Endothelial cell of umbilical vein (primary cell): ENCODE measurements at regions of chr2 and their contacts with region 1.

Region 1: GRCh38 chr2:18378020-18378653 is 182.3 kb downstream of the RDH14 start:
- DNase-seq: peak; percentile 54
- H3K4me3 ChIP-seq: no peak overlapping the region
- H3K27ac ChIP-seq: no peak overlapping the region
- H3K4me1 ChIP-seq: peaks cover 9% of the 10 kb centered on the region
- H3K27me3 ChIP-seq: no peaks in the 10 kb centered on the region
- CTCF ChIP-seq: peak; percentile 68 to 77
- POLR2A ChIP-seq: no peak

Region 2: DNA sequence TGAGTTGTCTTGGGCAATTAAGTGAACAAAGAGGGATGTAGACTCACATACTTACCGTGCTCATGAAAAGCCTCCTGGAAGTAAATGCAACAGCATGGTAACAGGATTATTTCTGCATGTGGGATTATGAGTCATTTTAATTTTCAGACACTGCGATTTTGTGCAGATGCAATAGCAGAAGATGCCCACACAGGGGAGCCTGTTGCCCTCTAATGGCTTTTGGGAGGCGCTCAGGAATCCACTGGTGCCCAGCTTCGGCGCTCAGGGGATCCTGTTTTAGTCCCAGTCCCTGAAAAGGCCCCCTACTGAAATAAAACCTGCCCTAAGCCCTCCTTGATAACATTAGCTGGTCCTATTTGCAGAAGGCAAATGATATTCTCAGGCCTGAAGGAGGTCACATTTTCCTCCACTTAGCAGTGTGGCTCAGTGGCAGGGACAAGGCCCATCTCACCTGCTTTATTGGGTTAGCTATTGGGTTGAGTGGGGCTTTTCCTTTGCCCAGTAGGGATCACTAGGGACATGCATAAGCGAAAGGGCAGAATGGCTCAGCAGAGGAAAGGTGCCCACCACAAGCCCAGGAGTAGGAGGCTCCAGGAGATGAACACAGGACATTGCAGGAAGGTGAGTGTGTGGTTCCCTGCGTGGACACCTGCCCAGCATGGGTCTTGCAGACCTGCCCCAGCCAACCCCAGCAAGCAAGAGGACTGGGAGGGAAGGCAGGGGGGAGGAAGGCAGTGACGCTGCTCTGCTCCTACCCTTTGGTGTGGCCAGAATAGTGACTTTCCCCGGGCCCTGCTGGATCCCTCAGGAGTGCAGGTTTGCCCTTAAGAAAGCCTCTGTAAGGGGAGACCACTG is 526.2 kb before region 1 on chr2:
- CTCF ChIA-PET with region 1: interaction called, 42 read pairs
- POLR2A ChIA-PET with region 1: no interaction called
- dilution Hi-C with region 1: no loop called
- intact Hi-C with region 1: loop called (anchors 1 kb)
- DNase-seq: peak; percentile 51
- H3K4me3 ChIP-seq: no peak overlapping the region
- H3K27ac ChIP-seq: no peak overlapping the region
- H3K4me1 ChIP-seq: no peaks in the 10 kb centered on the region
- H3K27me3 ChIP-seq: no peaks in the 10 kb centered on the region
- CTCF ChIP-seq: peak; percentile 72 to 79
- POLR2A ChIP-seq: no peak

Region 3: GRCh38 chr2:18077704-18078103 is 300.4 kb before region 1 on chr2:
- CTCF ChIA-PET with region 1: no interaction called
- POLR2A ChIA-PET with region 1: no interaction called
- dilution Hi-C with region 1: no loop called
- intact Hi-C with region 1: loop called (anchors 10 kb)
- DNase-seq: no peak
- H3K4me3 ChIP-seq: no peak overlapping the region
- H3K27ac ChIP-seq: no peak overlapping the region
- H3K4me1 ChIP-seq: no peaks in the 10 kb centered on the region
- H3K27me3 ChIP-seq: no peaks in the 10 kb centered on the region
- CTCF ChIP-seq: no peak
- POLR2A ChIP-seq: no peak

Region 4: DNA sequence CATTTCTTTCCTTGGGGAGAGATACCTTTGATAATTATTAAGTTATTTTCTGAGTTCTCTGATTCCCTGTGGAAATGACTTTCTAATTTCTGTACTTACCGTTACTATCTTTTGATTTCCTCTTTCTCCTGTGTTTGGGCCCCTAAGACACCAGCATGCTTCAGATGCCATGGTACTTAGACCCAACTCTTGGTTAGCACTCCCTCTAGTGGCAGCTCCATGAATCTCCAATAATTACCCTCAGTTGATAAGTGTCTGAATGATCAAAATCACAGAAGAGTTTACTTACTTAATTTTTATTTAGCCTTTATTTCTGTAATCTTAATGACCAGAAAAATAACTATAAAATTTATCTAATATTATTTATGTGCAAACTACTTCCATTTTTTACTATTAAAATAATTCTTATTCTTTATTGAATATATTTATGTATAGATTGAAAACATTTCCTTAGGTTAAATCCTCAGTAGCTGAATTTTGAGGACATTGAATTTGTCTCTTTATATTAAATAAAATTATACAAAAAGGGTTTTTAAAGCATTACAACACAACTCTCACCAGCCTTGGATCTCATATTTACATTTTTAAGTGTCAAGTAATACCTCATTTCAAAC is 199.3 kb before region 1 on chr2:
- CTCF ChIA-PET with region 1: interaction called, 30 read pairs
- POLR2A ChIA-PET with region 1: no interaction called
- dilution Hi-C with region 1: no loop called
- intact Hi-C with region 1: loop called (anchors 1 kb)
- DNase-seq: peak; percentile 65
- H3K4me3 ChIP-seq: no peak overlapping the region
- H3K27ac ChIP-seq: no peak overlapping the region
- H3K4me1 ChIP-seq: no peaks in the 10 kb centered on the region
- H3K27me3 ChIP-seq: peaks cover 0 to 2% of the 10 kb centered on the region in 2 experiments
- CTCF ChIP-seq: peak; percentile 62 to 67
- POLR2A ChIP-seq: no peak

Region 5: GRCh38 chr2:18219676-18220075 is 158.5 kb before region 1 on chr2:
- CTCF ChIA-PET with region 1: interaction called, 65 read pairs
- POLR2A ChIA-PET with region 1: no interaction called
- dilution Hi-C with region 1: no loop called
- intact Hi-C with region 1: loop called (anchors 1 kb)
- DNase-seq: no peak
- H3K4me3 ChIP-seq: no peak overlapping the region
- H3K27ac ChIP-seq: no peak overlapping the region
- H3K4me1 ChIP-seq: no peaks in the 10 kb centered on the region
- H3K27me3 ChIP-seq: no peaks in the 10 kb centered on the region
- CTCF ChIP-seq: peak in 1 of 2 donors; percentile 16
- POLR2A ChIP-seq: no peak

Region 6: GRCh38 chr2:18232731-18233438 is 145.3 kb before region 1 on chr2:
- CTCF ChIA-PET with region 1: no interaction called
- POLR2A ChIA-PET with region 1: no interaction called
- dilution Hi-C with region 1: no loop called
- intact Hi-C with region 1: no loop called
- DNase-seq: no peak
- H3K4me3 ChIP-seq: no peak overlapping the region
- H3K27ac ChIP-seq: no peak overlapping the region
- H3K4me1 ChIP-seq: no peaks in the 10 kb centered on the region
- H3K27me3 ChIP-seq: no peaks in the 10 kb centered on the region
- CTCF ChIP-seq: no peak
- POLR2A ChIP-seq: no peak